Panc1 (cell line): ENCODE measurements at regions of chr2 and their contacts with region 1.

Region 1: DNA sequence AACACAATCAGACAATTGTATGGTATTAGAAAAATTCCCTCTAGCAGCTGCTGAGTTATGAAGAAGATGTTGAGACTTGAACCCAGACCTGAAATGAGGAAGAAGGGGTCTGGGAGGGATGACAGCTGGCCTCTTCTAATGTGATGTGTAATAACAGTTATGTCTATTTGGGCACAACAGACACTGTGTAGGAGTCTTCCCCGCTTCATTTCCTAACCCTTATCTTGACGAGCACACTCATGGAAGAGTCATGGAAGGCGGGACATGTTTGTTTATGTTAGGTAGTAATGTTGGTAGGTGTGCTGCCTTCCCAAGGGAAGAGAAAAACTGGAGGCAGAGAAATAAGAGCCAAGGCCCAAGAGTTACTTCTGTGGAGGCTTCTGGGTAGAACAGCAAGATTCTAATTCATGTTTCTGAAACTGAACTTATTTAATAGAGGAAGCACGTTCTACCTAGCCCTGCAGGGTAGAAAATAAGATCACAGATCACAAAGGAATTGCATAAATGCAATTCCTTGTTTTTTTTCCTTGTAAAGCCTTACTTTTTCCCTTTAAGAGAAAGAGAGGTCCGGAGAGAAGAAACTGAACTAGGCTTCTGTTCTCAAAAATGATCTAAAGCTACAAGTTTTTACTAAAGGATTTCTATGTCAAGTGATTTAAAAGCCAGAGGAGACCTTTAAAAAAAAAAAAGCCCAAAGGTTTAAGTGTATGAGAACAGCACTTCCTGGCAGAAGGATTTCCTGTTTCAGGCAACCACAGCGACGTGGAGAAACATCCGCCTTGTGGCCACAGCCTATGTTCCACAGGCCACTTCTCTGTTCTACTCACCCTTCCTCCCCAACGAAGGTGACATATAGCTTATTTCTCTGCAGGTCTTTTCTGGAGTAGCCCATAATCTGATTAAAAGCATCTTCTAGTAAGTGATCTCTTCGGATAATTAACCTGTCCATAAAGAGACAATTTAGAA is 68.5 kb upstream of the STK17B start:
- DNase-seq: no peak
- ATAC-seq: peak; percentile 88
- H3K4me3 ChIP-seq: no peak overlapping the region
- H3K27ac ChIP-seq: no peak overlapping the region
- H3K4me1 ChIP-seq: no peaks in the 10 kb centered on the region
- H3K27me3 ChIP-seq: no peaks in the 10 kb centered on the region
- CTCF ChIP-seq: no peak

Region 2: DNA sequence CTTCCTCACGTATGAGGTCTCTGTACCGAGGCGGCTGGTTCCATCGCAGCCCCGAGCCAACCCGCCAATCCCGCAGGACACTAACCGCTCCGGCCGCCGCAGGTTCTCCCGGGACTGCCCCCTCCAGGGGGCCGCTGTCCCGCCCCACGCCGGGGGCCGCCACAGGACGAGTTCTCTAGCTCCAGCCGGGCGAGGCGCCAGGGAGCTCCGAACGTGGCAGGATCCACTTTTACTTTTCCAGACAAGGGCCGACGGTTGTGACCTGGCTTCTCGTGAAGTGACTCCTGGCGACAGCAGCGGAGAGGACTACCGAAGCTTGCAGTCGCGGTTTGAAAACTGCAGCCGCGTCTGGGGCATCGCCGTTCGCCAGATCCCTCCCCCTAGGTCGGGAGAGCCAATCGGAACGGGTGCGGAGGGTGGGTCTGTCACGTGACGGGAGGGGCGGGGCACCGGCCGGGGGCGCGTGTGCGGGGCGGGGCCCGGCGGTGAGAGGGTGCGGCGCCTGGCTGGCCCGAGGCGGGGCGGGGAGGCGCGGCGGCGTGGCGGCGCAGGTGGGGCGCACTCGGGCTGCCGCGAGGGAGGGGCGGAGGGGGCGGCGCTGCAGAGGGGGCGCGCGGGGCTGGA is 68.5 kb before region 1 on chr2 and contains the start of gene STK17B:
- CTCF ChIA-PET with region 1: no interaction called
- POLR2A ChIA-PET with region 1: interaction called, 10 read pairs
- in situ Hi-C with region 1: no loop called
- intact Hi-C with region 1: no loop called
- DNase-seq: peak; percentile 67
- ATAC-seq: peak; percentile 92
- H3K4me3 ChIP-seq: peak within 1 kb of the TSS; percentile 86 to 96
- H3K27ac ChIP-seq: peak within 1 kb of the TSS; percentile 89
- H3K4me1 ChIP-seq: peaks cover 26% of the 10 kb centered on the region
- H3K27me3 ChIP-seq: no peaks in the 10 kb centered on the region
- CTCF ChIP-seq: peak; percentile 14; the same call in 1 of the 2 replicates
- total RNA-seq, gene STK17B: 19.3 TPM